ENCODE measurements at regions of chr4 and their contacts with region 1.

Region 1: DNA sequence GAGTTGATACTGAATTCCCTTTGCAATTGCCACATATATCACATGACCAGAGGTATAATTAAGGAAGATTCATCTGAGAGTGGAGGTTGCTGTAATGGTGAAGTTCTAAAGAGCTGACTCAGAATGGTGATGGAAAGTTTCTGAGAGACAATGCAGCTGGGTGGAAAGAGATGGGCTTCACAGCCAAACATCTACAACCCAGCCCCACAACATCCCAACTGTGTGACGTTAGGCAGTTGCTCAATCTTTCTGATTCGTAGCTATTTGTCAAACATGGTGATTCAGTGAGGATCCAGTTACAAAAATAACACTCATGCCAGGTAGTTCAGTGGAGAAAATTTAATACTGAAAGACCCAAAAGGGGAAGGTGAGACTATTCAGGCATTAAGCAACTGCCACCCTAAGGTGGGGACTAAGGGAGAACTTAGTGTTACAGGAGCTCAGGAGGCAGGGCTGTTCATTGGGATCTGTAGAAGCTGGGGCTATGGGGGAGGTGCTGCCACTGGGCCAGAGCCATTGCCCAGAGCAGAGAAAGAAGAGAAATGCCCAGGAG is 6.9 kb upstream of the AFF1 start:
- DNase-seq: no peak
- ATAC-seq: peak; percentile 68 to 80
- H3K4me3 ChIP-seq: no peak overlapping the region
- H3K27ac ChIP-seq: no peak overlapping the region
- H3K4me1 ChIP-seq: peaks cover 17% of the 10 kb centered on the region
- H3K27me3 ChIP-seq: no peaks in the 10 kb centered on the region
- CTCF ChIP-seq: no peak

Region 2: DNA sequence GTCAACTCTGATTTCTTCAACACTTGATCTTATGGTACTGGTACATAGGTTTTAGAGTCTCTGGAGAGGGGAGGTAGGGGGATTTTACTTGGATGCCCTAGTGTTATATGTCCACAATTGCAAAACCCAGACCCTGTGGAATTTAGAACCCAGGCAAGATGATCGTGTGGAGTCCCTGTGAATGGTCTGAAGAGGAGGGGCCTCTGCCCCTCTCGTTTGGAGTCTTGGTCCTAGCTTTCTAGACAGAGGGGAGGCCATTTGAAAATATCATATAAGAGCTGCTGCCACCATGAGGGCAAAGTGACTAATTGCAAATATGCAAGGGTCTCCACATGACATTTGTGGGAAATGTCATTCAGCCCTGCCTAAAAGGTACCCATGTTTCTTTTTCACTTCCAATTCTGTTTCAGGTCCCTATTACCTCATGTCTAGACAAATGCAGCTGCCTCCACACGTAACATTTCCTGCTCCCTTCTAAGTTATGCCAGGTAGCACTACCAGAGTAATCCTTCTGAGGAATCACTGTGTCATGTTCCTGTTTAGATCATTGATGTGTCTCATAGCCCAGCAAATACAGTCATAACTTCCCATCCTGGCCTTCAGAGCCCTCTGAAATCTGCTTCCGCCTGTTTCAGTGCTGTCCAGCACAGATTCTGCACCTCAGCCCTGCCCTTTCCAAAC is 165.7 kb after region 1 on chr4:
- intact Hi-C with region 1: loop called (anchors 10 kb)
- DNase-seq: no peak
- ATAC-seq: peak; percentile 71 to 77
- H3K4me3 ChIP-seq: no peak overlapping the region
- H3K27ac ChIP-seq: peak overlapping the region; percentile 19
- H3K4me1 ChIP-seq: peaks cover 44% of the 10 kb centered on the region
- H3K27me3 ChIP-seq: no peaks in the 10 kb centered on the region
- CTCF ChIP-seq: peak; percentile 64

Region 3: DNA sequence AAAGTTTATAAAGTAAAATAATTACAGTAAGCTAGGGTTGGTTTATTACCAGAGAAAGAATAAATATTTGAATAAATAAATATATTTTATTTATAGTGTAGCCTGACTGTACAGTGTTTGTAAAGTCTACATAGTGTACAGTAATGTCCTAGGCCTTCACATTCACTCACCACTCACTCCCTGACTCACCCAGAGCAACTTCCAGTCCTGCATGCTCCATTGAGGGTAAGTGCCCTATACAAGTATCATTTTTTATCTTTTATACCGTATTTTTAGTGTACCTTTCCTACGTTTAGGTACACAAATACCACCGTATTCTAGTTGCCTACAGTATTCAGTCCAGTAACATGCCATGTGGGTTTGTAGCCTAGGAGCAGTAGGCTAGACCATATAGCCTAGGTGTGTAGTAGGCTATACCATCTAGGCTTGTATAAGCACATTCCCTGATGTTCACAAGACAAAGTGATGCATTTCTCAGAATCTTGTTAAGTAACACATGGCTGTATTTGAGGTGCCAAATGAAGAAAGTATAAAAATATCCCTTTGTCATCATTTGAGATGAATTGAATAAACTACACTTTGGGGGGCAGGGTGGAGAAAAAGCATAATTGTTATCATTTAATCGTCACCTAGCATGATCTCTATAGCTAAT is 307.2 kb after region 1 on chr4:
- intact Hi-C with region 1: loop called (anchors 10 kb)
- DNase-seq: no peak
- ATAC-seq: peak in 1 of 2 donors; percentile 18
- H3K4me3 ChIP-seq: peak overlapping the region; percentile 47
- H3K27ac ChIP-seq: no peak overlapping the region
- H3K4me1 ChIP-seq: peaks cover 3% of the 10 kb centered on the region
- H3K27me3 ChIP-seq: no peaks in the 10 kb centered on the region
- CTCF ChIP-seq: no peak

Measured in lower lobe of right lung (tissue), 2 donors.